Naive thymus-derived CD4-positive, alpha-beta T cell (primary cell): ENCODE measurements at regions of chr5 and their contacts with region 1.

Region 1: DNA sequence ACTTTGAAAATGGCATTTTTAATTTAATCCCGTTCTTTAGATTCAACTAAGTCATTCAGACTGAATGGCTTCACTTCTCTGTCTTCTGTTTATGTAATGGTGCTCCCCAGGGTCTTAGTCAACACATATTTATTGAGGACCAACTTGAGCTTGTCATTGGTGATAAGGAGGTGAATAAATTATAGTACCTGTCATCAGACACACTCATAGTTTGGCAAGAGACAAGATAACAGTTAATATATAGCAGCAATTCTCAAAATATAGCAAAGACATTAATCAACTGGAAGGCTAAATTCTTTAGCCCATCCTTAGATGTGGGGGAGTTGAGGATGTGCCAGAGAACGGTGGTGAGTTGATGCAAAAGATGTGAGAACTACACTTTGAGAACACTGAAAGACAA is 78.4 kb downstream of the MACIR start:
- DNase-seq: no peak
- ATAC-seq: no peak
- H3K4me3 ChIP-seq: no peak overlapping the region
- H3K4me3 Mint-ChIP-seq: no peak overlapping the region
- H3K27ac ChIP-seq: no peak overlapping the region
- H3K27ac Mint-ChIP-seq: no peak overlapping the region
- H3K4me1 ChIP-seq: no peaks in the 10 kb centered on the region
- H3K4me1 Mint-ChIP-seq: peaks cover 0 to 6% (median 0%) of the 10 kb centered on the region in 7 donors
- H3K27me3 ChIP-seq: no peaks in the 10 kb centered on the region
- H3K27me3 Mint-ChIP-seq: peaks cover 0 to 10% (median 3%) of the 10 kb centered on the region in 5 donors

Region 2: GRCh38 chr5:103207653-103208052 is 129.3 kb before region 1 on chr5:
- CTCF ChIA-PET with region 1: no interaction called
- POLR2A ChIA-PET with region 1: no interaction called
- intact Hi-C with region 1: no loop called
- DNase-seq: no peak
- ATAC-seq: no peak
- H3K4me3 ChIP-seq: no peak overlapping the region
- H3K4me3 Mint-ChIP-seq: peak overlapping the region in 1 of 10 donors; percentile 6
- H3K27ac ChIP-seq: no peak overlapping the region
- H3K27ac Mint-ChIP-seq: peak overlapping the region in 2 of 9 donors; percentile 33 to 70
- H3K4me1 ChIP-seq: peaks cover 0 to 7% of the 10 kb centered on the region in 2 donors
- H3K4me1 Mint-ChIP-seq: peaks cover 10 to 30% (median 14%) of the 10 kb centered on the region in 7 donors
- H3K27me3 ChIP-seq: no peaks in the 10 kb centered on the region
- H3K27me3 Mint-ChIP-seq: no peaks in the 10 kb centered on the region

Region 3: DNA sequence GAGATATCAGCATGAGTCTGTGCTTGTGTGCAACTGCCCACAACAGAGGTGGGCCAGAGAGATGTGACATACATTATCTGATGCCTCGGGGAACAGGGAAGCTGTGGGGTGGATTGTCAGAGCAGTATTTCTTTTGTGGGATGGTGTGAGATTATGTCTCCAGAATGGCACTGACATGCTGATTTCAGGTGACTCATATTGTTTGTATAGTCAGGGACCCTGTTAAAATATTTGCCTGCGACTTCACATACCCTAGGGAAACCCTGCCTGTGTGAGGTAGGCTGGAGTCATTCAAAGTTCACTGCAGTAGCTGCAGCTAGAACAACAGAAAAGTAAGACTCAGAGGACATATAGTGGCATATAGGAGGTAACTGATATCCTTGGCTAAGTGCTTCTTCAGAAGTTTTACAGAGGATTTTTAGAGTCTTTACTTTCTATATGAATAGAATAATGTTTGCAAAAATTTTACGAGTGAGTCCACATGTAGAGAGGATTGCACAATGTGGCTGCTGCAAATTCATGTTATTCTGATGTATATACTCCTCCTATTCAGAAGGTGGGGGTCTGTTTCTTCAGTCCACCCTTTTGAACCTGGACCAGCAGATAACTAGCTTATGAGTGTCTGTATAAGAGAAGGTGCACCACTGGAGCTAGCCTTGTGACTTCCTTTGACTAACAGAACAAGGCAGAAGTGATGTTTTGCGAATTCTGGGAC is 10.9 kb after region 1 on chr5:
- CTCF ChIA-PET with region 1: interaction called, 3 read pairs
- POLR2A ChIA-PET with region 1: no interaction called
- intact Hi-C with region 1: loop called in 1 of 2 experiments (anchors 2 kb)
- DNase-seq: peak in 1 of 9 donors; percentile 1
- ATAC-seq: no peak
- H3K4me3 ChIP-seq: no peak overlapping the region
- H3K4me3 Mint-ChIP-seq: no peak overlapping the region
- H3K27ac ChIP-seq: no peak overlapping the region
- H3K27ac Mint-ChIP-seq: no peak overlapping the region
- H3K4me1 ChIP-seq: no peaks in the 10 kb centered on the region
- H3K4me1 Mint-ChIP-seq: no peaks in the 10 kb centered on the region
- H3K27me3 ChIP-seq: peaks cover 0 to 3% of the 10 kb centered on the region in 2 donors
- H3K27me3 Mint-ChIP-seq: peaks cover 17 to 31% (median 22%) of the 10 kb centered on the region in 5 donors